PC-9 (cell line): ENCODE measurements at regions of chr9 and their contacts with region 1.

Region 1: DNA sequence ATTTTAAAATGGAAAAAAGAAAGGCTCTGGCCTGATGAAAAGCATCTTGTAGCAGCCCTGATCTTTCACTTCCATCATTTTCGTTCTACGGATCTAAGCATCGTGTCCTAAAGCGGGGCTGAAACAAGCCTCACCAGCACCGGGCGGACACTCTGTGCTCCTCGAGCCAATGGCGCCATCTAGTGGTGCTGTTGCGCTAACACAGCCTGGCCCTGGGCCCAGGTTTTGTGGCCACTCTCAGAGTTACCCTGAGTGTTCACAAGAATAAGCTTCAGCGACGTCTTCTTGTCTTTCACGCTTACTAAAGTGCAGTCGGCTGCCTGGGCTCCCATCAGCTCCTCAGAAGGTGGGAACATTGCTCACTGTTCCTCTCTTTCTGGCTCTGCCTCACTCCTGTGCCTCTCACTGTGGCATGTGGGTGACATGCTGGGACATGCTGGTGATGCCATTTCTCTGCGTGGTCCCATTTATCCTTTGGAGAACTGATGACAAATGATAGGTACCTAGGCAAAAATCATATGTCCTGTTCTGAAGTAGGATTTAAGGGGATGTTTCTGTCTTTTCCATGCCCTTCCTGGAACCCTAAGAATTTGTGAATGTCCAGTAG is 32.7 kb downstream of the DMRT3 start:
- DNase-seq: peak; percentile 38 to 64
- H3K4me3 ChIP-seq: no peak overlapping the region
- H3K27ac ChIP-seq: no peak overlapping the region
- H3K4me1 ChIP-seq: no peaks in the 10 kb centered on the region
- H3K27me3 ChIP-seq: no peaks in the 10 kb centered on the region
- CTCF ChIP-seq: peak; percentile 90

Region 2: GRCh38 chr9:347667-348292 is 661.4 kb before region 1 on chr9:
- CTCF ChIA-PET with region 1: no interaction called
- POLR2A ChIA-PET with region 1: no interaction called
- intact Hi-C with region 1: loop called (anchors 10 kb)
- DNase-seq: no peak
- H3K4me3 ChIP-seq: no peak overlapping the region
- H3K27ac ChIP-seq: no peak overlapping the region
- H3K4me1 ChIP-seq: no peaks in the 10 kb centered on the region
- H3K27me3 ChIP-seq: no peaks in the 10 kb centered on the region
- CTCF ChIP-seq: peak; percentile 76

Region 3: GRCh38 chr9:385818-386398 is 623.3 kb before region 1 on chr9:
- CTCF ChIA-PET with region 1: no interaction called
- POLR2A ChIA-PET with region 1: no interaction called
- intact Hi-C with region 1: loop called (anchors 10 kb)
- DNase-seq: peak; percentile 47 to 52
- H3K4me3 ChIP-seq: no peak overlapping the region
- H3K27ac ChIP-seq: no peak overlapping the region
- H3K4me1 ChIP-seq: no peaks in the 10 kb centered on the region
- H3K27me3 ChIP-seq: no peaks in the 10 kb centered on the region
- CTCF ChIP-seq: peak; percentile 93

Region 4: GRCh38 chr9:875119-875962 is 133.9 kb before region 1 on chr9:
- CTCF ChIA-PET with region 1: interaction called, 11 read pairs
- POLR2A ChIA-PET with region 1: no interaction called
- intact Hi-C with region 1: no loop called
- DNase-seq: no peak
- H3K4me3 ChIP-seq: no peak overlapping the region
- H3K27ac ChIP-seq: no peak overlapping the region
- H3K4me1 ChIP-seq: no peaks in the 10 kb centered on the region
- H3K27me3 ChIP-seq: peaks cover 50% of the 10 kb centered on the region
- CTCF ChIP-seq: no peak

Region 5: GRCh38 chr9:893843-894420 is 115.3 kb before region 1 on chr9:
- CTCF ChIA-PET with region 1: interaction called, 9 read pairs
- POLR2A ChIA-PET with region 1: no interaction called
- intact Hi-C with region 1: loop called (anchors 2 kb)
- DNase-seq: peak in 1 of 2 experiments; percentile 12
- H3K4me3 ChIP-seq: no peak overlapping the region
- H3K27ac ChIP-seq: no peak overlapping the region
- H3K4me1 ChIP-seq: no peaks in the 10 kb centered on the region
- H3K27me3 ChIP-seq: no peaks in the 10 kb centered on the region
- CTCF ChIP-seq: peak; percentile 82